ENCODE measurements at regions of chr13 and their contacts with region 1.

Region 1: GRCh38 chr13:44050450-44051063 is 170.9 kb downstream of the LACC1 start:
- DNase-seq: no peak

Region 2: GRCh38 chr13:43905435-43906031 is 145.0 kb before region 1 on chr13:
- intact Hi-C with region 1: loop called (anchors 5 kb)
- DNase-seq: no peak

Region 3: GRCh38 chr13:44108331-44108858 is 57.8 kb after region 1 on chr13:
- intact Hi-C with region 1: loop called (anchors 10 kb)
- DNase-seq: no peak

Region 4: DNA sequence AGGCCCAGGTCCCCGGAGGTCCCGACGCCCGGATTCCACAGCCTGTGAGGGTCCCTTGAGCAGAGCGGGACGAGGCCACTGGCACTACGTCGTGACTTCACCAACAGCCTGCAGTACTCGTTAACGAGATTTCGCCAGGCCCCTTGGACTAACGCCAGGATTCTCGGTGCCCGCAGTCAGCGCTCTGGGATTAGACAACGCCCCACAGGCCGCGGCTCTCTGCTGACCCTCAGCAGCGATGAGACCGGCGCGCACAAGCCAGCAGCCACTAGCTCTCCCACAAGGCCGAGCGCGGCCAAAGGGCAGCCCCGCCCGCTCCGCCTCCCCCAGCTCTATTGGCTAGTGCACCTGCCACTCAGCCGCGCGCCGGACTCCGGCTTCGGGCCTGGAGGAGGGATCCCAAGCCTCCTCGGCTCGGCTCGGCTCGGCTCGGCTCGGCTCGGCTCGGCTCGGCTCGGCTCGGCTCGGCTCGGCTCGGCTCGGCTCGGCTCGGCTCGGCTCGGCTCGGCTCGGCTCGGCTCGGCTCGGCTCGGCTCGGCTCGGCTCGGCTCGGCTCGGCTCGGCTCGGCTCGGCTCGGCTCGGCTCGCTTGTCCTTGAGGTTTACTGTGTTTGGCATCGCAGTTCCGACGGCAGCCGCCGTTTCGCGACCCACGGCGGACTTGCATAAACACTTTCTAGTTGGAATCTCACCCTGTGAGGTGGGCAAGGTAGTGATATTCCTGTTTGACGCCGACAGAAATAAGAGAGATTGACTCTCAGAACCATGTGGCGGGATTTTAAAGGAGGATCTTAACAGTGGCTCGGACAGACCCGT is 91.4 kb after region 1 on chr13:
- intact Hi-C with region 1: loop called (anchors 5 kb)
- DNase-seq: peak; percentile 100

Measured in cardiac septum (tissue), 1 donor.